Activated CD4-positive, alpha-beta memory T cell treated with anti-CD3 and anti-CD28 coated beads for 36 hours (primary cell): ENCODE measurements at regions of chr13 and their contacts with region 1.

Region 1: DNA sequence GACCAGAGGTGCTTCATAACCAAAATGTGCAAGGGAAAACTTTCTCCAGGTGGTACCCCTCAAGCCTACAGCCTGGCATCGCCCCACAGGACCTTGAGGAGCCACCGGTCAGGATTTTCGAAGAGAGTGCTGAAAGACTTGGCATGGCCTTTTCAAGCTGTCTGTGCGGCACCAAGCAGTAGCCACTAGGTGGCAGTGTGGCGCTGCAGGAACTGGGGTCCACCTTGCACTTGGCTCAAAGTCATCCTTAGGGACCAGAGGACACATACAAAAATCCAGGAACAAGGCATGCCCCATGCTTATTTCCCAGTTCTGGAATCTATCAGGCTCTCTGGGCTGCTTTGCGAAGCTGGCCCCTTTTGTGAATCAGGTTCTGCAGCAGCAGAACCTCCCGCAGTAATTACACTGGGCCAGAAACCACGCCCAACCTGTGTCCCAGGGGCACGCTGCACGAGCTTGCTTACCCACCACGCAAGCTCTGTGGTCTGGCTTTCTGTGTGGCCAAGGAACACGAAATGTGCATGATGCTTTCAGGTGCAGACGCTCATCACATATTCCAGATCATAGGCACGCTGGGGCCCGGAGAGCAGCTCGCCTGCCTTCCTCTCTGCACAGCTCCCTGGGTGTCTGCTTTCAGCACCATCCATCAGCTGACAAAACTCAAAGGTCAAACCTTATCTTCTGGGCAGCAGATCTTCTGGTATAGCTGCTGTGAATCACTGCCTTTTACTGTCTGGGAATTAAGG is 87.2 kb downstream of the SLC7A1 start:
- DNase-seq: peak; percentile 82
- H3K4me3 Mint-ChIP-seq: no peak overlapping the region
- H3K27ac Mint-ChIP-seq: no peak overlapping the region
- H3K4me1 Mint-ChIP-seq: no peaks in the 10 kb centered on the region
- H3K27me3 Mint-ChIP-seq: peaks cover 2% of the 10 kb centered on the region

Region 2: GRCh38 chr13:29496240-29496712 is 12.0 kb before region 1 on chr13:
- CTCF ChIA-PET with region 1: interaction called, 29 read pairs
- POLR2A ChIA-PET with region 1: no interaction called
- intact Hi-C with region 1: no loop called
- DNase-seq: peak; percentile 7
- H3K4me3 Mint-ChIP-seq: no peak overlapping the region
- H3K27ac Mint-ChIP-seq: no peak overlapping the region
- H3K4me1 Mint-ChIP-seq: peaks cover 7% of the 10 kb centered on the region
- H3K27me3 Mint-ChIP-seq: peaks cover 20% of the 10 kb centered on the region

Region 3: GRCh38 chr13:29684441-29684840 is 176.1 kb after region 1 on chr13:
- CTCF ChIA-PET with region 1: interaction called, 10 read pairs
- POLR2A ChIA-PET with region 1: no interaction called
- intact Hi-C with region 1: no loop called
- DNase-seq: no peak
- H3K4me3 Mint-ChIP-seq: no peak overlapping the region
- H3K27ac Mint-ChIP-seq: no peak overlapping the region
- H3K4me1 Mint-ChIP-seq: no peaks in the 10 kb centered on the region
- H3K27me3 Mint-ChIP-seq: peaks cover 13% of the 10 kb centered on the region

Region 4: DNA sequence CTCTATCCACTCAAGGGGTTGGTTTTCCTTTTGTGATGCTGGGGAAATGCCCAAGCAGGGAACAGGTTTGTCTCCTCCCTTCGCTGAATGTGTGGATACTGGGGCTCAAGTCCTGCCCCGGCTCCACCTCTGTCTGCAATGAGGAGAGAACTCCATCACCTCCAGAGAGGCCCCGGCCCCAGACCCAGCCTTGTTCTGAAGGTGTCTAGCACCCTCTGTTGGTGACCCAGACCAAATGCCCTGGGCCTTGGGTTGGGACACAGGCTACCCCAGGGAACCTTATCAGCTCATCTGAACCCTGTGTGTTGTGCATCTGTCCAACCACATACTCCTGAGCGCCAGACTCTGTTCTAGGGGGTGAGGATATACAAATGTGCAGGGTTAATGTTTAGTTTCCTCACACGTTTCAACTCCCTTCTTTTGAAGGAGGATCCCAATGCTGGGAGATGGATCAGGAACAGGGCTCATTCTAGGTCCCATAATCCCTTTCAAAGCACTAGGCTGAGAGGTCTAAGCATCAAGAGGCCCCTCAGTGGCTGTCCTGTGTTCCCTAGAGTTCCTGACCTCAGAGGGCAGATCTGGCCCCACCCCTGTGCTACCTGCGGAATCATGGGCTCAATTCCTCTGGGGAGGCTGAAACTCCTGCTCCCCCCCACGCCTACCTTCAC is 199.7 kb after region 1 on chr13:
- CTCF ChIA-PET with region 1: interaction called, 86 read pairs
- POLR2A ChIA-PET with region 1: no interaction called
- intact Hi-C with region 1: loop called (anchors 1 kb)
- DNase-seq: peak; percentile 63
- H3K4me3 Mint-ChIP-seq: no peak overlapping the region
- H3K27ac Mint-ChIP-seq: no peak overlapping the region
- H3K4me1 Mint-ChIP-seq: no peaks in the 10 kb centered on the region
- H3K27me3 Mint-ChIP-seq: peaks cover 6% of the 10 kb centered on the region

Region 5: GRCh38 chr13:29771247-29771646 is 262.9 kb after region 1 on chr13:
- CTCF ChIA-PET with region 1: interaction called, 12 read pairs
- POLR2A ChIA-PET with region 1: no interaction called
- intact Hi-C with region 1: no loop called
- DNase-seq: no peak
- H3K4me3 Mint-ChIP-seq: no peak overlapping the region
- H3K27ac Mint-ChIP-seq: no peak overlapping the region
- H3K4me1 Mint-ChIP-seq: peaks cover 4% of the 10 kb centered on the region
- H3K27me3 Mint-ChIP-seq: no peaks in the 10 kb centered on the region